Activated T-helper 1 cell treated with anti-CD3 and anti-CD28 coated beads, Interleukin-12 subunit alpha, Interleukin-12 subunit beta, Interleukin-2, Interleukin-4 antibody, amounts not matched to agents 30 ng/mL and 10 ng/mL and 1 ng/mL, durations not matched to agents 14 hours and 24 hours and 36 hours (primary cell): ENCODE measurements at regions of chr13 and their contacts with region 1.

Region 1: GRCh38 chr13:21458813-21459701 is at the start of gene ZDHHC20:
- DNase-seq: peak; percentile 86
- H3K4me3 Mint-ChIP-seq: peak within 1 kb of the TSS; percentile 94
- H3K27ac Mint-ChIP-seq: peak within 1 kb of the TSS; percentile 94
- H3K4me1 Mint-ChIP-seq: peaks cover 32% of the 10 kb centered on the region
- H3K27me3 Mint-ChIP-seq: no peaks in the 10 kb centered on the region
- total RNA-seq, gene ZDHHC20: 61.2 and 66.4 TPM in 2 replicates

Region 2: DNA sequence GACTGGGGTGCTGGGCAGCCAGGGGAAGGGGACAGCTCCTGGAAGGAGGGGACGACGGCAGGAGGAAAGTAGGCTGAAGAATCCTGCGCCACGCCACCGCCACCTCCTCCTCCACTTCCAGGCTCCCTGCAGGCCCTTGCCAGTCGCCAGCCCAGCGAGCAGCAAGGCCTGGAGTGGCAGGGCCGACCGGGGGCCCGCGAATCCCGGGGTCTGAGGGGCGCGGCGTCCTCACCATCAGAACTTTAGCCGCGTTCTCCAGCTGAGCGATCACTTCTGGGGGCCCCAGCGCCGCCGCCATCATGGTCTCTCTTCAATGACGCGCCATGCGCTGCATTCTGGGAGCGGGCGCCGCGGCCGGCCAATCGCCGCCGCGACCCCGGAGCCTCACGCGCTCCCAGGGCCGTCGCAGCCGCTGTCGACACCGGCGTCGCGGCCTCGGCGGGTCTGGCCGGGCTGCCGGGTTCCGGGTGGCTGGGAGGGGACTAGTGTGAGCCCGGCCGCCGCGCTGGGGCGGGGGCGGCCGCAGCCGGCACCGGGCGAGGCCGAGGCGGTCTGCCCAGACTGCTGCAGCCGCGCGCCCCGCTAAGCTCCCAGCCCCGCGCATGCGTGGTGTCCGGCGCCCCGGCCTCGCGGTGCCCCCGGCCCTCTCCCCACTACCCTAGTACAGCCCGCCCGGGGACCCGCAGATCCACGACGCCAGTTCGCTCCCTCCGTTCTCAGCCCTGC is 556.5 kb before region 1 on chr13 and contains the start of gene XPO4:
- intact Hi-C with region 1: loop called (anchors 5 kb)
- DNase-seq: peak; percentile 80
- H3K4me3 Mint-ChIP-seq: peak within 1 kb of the TSS; percentile 99
- H3K27ac Mint-ChIP-seq: peak within 1 kb of the TSS; percentile 94
- H3K4me1 Mint-ChIP-seq: peaks cover 32% of the 10 kb centered on the region
- H3K27me3 Mint-ChIP-seq: peaks cover 6% of the 10 kb centered on the region
- total RNA-seq, gene XPO4: 33.5 and 34.1 TPM in 2 replicates

Region 3: DNA sequence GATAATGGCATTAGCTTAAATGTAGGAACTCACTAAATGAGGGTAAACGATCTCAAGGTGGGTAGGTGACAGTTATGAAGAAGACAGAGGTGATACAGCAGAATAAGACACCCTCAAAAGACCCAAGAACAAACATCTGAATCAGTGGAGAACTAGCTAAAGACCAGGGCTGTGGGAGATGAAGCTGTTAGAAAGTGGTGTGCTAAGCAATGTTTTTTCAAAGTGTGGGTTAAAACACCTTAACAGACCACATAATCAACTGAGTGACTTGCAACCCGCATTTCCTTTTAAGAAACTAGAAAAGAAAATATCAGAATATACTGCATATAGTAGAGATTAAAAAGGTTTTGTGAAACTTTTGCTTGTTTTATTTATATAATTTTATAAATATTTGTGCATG is 69.9 kb before region 1 on chr13:
- intact Hi-C with region 1: loop called (anchors 2 kb)
- DNase-seq: no peak
- H3K4me3 Mint-ChIP-seq: no peak overlapping the region
- H3K27ac Mint-ChIP-seq: no peak overlapping the region
- H3K4me1 Mint-ChIP-seq: peaks cover 8% of the 10 kb centered on the region
- H3K27me3 Mint-ChIP-seq: no peaks in the 10 kb centered on the region

Region 4: DNA sequence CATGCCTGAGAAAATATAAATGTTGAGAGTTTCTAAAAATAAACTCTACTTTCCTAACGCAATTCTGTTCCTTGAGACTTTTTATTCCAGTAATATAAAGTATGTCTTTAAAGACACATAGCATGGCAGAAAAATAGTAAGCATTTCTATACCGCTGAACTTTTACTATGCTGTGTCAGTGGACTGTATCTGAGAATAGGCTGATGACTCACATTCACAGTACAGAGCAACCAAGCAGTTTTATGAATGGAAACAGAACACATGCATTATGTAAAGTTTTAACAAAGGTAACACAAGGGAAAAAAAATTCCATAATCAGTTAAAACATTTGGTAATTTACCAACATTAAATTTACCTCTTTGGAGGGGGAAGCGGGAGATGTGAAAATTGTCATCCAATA is 38.4 kb before region 1 on chr13:
- intact Hi-C with region 1: loop called (anchors 5 kb)
- DNase-seq: no peak
- H3K4me3 Mint-ChIP-seq: no peak overlapping the region
- H3K27ac Mint-ChIP-seq: no peak overlapping the region
- H3K4me1 Mint-ChIP-seq: peaks cover 5% of the 10 kb centered on the region
- H3K27me3 Mint-ChIP-seq: no peaks in the 10 kb centered on the region

Region 5: DNA sequence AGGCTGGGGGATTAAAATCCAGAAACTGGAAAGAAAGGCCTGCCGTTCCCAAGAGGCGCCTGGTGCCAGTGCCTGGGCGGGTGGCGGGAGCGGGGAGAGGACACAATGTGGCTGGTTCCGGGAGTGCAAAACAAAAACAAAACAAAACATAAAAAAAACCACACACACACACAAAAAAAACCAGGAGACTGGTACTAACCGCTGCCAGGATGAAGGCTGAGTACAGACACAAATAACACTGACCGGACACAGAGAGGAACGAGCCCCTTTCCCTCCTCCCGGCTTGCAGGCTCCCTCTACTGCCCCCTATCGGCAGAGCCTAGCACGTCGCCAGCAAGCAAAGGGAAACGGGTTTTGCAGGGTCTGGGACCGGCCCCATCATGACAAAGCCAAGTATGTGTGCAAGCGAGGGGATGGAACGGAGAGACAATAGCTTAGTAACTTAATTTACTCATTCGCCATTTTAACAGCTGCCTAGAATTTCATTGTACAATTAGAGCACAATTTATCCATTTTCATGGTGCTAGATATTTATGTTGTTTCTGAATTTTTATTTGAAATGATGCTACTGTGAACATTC is 17.9 kb after region 1 on chr13:
- intact Hi-C with region 1: loop called (anchors 2 kb)
- DNase-seq: peak; percentile 73
- H3K4me3 Mint-ChIP-seq: peak overlapping the region; percentile 67
- H3K27ac Mint-ChIP-seq: no peak overlapping the region
- H3K4me1 Mint-ChIP-seq: peaks cover 16% of the 10 kb centered on the region
- H3K27me3 Mint-ChIP-seq: peaks cover 8% of the 10 kb centered on the region

Region 6: DNA sequence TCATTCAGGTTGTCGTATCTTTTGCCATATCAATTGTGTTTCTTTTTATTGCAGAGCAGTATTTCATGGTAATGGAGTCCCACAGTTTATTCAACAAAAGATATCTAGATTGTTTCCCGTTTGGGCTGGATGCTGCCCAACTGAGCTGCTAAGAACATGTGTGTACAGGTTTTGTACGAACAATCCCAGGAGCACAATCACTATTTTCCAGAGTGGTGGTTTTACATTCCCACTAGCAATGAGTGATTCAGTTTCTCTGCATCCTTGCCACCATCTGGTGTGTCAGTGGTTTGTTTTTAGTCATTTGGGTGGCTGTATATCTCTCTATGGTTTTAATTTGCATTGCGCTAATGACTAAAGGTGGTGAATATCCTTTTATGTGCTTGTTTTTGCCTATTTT is 52.8 kb after region 1 on chr13:
- intact Hi-C with region 1: no loop called
- DNase-seq: no peak
- H3K4me3 Mint-ChIP-seq: no peak overlapping the region
- H3K27ac Mint-ChIP-seq: no peak overlapping the region
- H3K4me1 Mint-ChIP-seq: no peaks in the 10 kb centered on the region
- H3K27me3 Mint-ChIP-seq: no peaks in the 10 kb centered on the region